Heart right ventricle (tissue), 16 donors: ENCODE measurements at regions of chr3 and their contacts with region 1.

Region 1: DNA sequence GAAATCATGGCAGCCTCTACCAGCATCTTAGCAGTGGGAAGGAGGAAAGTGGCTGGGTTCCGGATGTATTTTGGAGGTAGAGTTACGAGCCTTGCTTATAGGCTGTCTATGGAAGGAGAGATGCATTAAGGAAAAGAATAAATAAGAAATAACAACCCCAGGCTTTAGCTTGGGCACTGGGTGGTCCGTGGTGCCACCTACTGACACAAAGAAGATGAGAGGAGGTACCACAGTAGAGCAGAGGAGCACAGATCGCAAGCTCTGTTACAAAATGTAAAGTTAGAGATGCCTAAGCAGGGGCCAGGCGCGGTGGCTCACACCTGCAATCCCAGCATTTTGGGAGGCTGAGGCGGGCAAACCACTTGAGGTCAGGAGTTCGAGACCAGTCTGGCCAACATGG is 74.8 kb downstream of the TMEM39A start:
- DNase-seq: no peak
- ATAC-seq: no peak
- H3K4me3 ChIP-seq: no peak overlapping the region
- H3K27ac ChIP-seq: no peak overlapping the region
- H3K4me1 ChIP-seq: no peaks in the 10 kb centered on the region
- H3K27me3 ChIP-seq: no peaks in the 10 kb centered on the region
- CTCF ChIP-seq: peak in 2 of 9 donors; percentile 31 to 36

Region 2: GRCh38 chr3:119364401-119364800 is 24.2 kb before region 1 on chr3:
- intact Hi-C with region 1: loop called in 1 of 10 experiments (anchors 1 kb)
- DNase-seq: no peak
- ATAC-seq: no peak
- H3K4me3 ChIP-seq: no peak overlapping the region
- H3K27ac ChIP-seq: no peak overlapping the region
- H3K4me1 ChIP-seq: peaks cover 5 to 62% (median 18%) of the 10 kb centered on the region in 9 donors
- H3K27me3 ChIP-seq: no peaks in the 10 kb centered on the region
- CTCF ChIP-seq: no peak

Region 3: DNA sequence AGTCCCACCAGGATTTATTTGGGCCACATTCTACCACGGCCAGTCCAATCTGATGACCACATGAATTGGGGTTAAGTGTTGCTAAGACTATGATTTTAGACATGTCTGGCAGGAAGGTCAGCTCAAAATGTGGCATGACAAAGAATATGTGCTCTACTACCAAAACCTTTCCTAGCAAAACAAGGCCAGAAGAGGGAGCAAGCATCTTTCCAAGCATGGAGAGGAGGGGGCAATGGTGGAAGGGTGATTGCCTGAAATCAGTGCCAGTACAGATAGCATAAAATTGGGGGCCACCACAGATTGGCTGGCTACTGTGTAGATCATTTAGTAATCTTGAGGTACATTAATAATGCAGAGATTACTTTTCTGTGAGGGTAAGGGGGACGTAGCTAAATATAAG is 31.6 kb after region 1 on chr3:
- intact Hi-C with region 1: no loop called
- DNase-seq: no peak
- ATAC-seq: no peak
- H3K4me3 ChIP-seq: no peak overlapping the region
- H3K27ac ChIP-seq: no peak overlapping the region
- H3K4me1 ChIP-seq: peaks cover 0 to 28% (median 4%) of the 10 kb centered on the region in 9 donors
- H3K27me3 ChIP-seq: no peaks in the 10 kb centered on the region
- CTCF ChIP-seq: peak in 2 of 9 donors; percentile 5 to 23

Region 4: GRCh38 chr3:119781330-119782198 is 393.0 kb after region 1 on chr3 and contains the start of gene NR1I2:
- intact Hi-C with region 1: no loop called
- DNase-seq: no peak
- ATAC-seq: no peak
- H3K4me3 ChIP-seq: no peak within 1 kb of the TSS
- H3K27ac ChIP-seq: no peak within 1 kb of the TSS
- H3K4me1 ChIP-seq: peaks cover 0 to 8% (median 0%) of the 10 kb centered on the region in 9 donors
- H3K27me3 ChIP-seq: no peaks in the 10 kb centered on the region
- CTCF ChIP-seq: no peak
- total RNA-seq, gene NR1I2: 0.11 to 0.31 (median 0.21) TPM in 7 of 10 donors, not detected in the others